Activated CD8-positive, alpha-beta memory T cell treated with anti-CD3 and anti-CD28 coated beads, Interleukin-2, amount 10 ng/mL, durations not matched to agents 7 days and 5 days (primary cell): ENCODE measurements at regions of chr18 and their contacts with region 1.

Region 1: GRCh38 chr18:23586249-23587196 is at the start of gene NPC1:
- DNase-seq: peak; percentile 95
- ATAC-seq: peak; percentile 93
- H3K4me3 Mint-ChIP-seq: peak within 1 kb of the TSS; percentile 94
- H3K27ac Mint-ChIP-seq: peak within 1 kb of the TSS; percentile 98
- H3K4me1 Mint-ChIP-seq: peaks cover 38% of the 10 kb centered on the region
- H3K27me3 Mint-ChIP-seq: no peaks in the 10 kb centered on the region
- total RNA-seq, gene NPC1: 36.1 to 37.4 TPM

Region 2: DNA sequence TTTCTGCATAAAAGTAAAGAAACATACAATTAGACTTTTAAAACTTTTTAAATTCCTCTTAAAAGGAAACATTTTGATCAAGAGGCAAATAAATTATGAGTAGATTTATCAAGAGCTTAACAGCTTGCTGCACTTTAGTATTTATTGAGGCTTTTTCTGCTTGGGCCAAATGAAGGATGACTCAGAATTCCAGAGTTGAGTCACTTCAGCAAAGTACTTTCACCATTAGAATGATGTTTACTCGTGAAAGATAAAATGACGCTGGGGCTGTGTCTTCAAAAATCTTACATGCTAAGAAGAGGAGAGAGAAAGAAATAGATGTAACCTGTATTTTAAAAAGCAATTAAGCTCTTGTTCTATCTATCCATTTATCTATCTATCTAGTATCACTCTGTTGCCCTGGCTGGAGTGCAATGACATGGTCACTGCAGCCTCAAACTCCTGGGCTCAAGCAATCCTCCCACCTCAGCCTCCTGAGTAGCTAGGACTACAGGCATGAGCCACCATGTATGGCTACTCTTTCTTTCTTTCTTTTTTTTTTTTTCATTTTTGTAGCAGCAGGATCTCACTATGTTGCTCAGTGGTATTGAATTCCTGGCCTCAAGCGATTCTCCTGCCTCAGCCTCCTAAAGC is 208.7 kb before region 1 on chr18:
- CTCF ChIA-PET with region 1: no interaction called
- DNase-seq: no peak
- ATAC-seq: peak; percentile 85
- H3K4me3 Mint-ChIP-seq: no peak overlapping the region
- H3K27ac Mint-ChIP-seq: peak overlapping the region; percentile 13
- H3K4me1 Mint-ChIP-seq: peaks cover 18% of the 10 kb centered on the region
- H3K27me3 Mint-ChIP-seq: no peaks in the 10 kb centered on the region

Region 3: DNA sequence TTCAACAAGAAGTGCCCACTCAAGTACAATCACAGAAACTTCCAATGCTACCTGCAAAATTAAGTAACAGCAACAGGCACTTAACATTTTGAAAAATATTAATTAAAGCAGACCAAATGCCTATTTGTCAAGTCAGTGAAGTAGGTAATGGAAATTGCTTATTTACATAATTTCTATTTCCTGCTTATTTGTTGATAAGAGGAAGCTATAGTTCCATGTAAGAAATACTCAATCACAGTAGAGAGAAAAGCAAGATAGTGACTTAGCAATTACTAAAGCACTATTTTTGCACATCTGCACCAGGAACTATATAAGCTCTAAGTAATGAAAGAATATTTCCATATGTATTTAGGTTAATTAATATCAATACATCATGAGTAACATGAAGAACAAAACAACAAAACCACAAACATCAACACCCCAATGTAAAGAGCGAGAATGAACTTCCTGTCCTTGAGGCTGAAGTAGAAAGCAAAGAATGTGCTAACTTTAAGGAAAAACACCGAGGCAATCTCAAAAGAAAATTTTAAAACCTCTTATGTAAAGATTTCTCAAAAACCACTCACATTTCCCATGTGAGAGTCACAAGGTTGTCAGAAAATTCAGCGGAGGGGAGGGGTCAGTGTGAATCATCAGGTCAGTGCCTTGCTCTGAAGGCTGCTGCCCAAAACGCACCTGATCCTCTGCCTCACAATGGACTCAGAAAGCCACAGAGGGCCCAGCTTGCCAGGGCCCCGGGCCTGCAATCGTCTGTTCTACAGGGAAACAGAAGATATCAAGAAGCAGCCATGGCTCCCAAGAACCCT is 12.7 kb before region 1 on chr18:
- CTCF ChIA-PET with region 1: interaction called, 11 read pairs
- DNase-seq: peak; percentile 61
- ATAC-seq: peak; percentile 70
- H3K4me3 Mint-ChIP-seq: peak overlapping the region; percentile 3
- H3K27ac Mint-ChIP-seq: peak overlapping the region; percentile 81
- H3K4me1 Mint-ChIP-seq: peaks cover 38% of the 10 kb centered on the region
- H3K27me3 Mint-ChIP-seq: no peaks in the 10 kb centered on the region

Region 4: GRCh38 chr18:23612435-23613085 is 26.0 kb after region 1 on chr18:
- CTCF ChIA-PET with region 1: no interaction called
- DNase-seq: no peak
- ATAC-seq: no peak
- H3K4me3 Mint-ChIP-seq: no peak overlapping the region
- H3K27ac Mint-ChIP-seq: no peak overlapping the region
- H3K4me1 Mint-ChIP-seq: no peaks in the 10 kb centered on the region
- H3K27me3 Mint-ChIP-seq: peaks cover 12% of the 10 kb centered on the region